ENCODE measurements at regions of chr17 and their contacts with region 1.

Region 1: GRCh38 chr17:74923533-74924249 is 382 bp upstream of the OTOP2 start:
- DNase-seq: peak; percentile 79
- ATAC-seq: peak; percentile 18
- H3K4me3 Mint-ChIP-seq: peak overlapping the region; percentile 70
- H3K27ac Mint-ChIP-seq: no peak overlapping the region
- H3K4me1 Mint-ChIP-seq: peaks cover 13% of the 10 kb centered on the region
- H3K27me3 Mint-ChIP-seq: peaks cover 74% of the 10 kb centered on the region
- CTCF ChIP-seq: peak; percentile 91

Region 2: GRCh38 chr17:74825952-74826719 is 97.6 kb before region 1 on chr17:
- CTCF ChIA-PET with region 1: no interaction called
- POLR2A ChIA-PET with region 1: no interaction called
- DNase-seq: no peak
- ATAC-seq: no peak
- H3K4me3 Mint-ChIP-seq: no peak overlapping the region
- H3K27ac Mint-ChIP-seq: no peak overlapping the region
- H3K4me1 Mint-ChIP-seq: no peaks in the 10 kb centered on the region
- H3K27me3 Mint-ChIP-seq: no peaks in the 10 kb centered on the region
- CTCF ChIP-seq: no peak

Region 3: DNA sequence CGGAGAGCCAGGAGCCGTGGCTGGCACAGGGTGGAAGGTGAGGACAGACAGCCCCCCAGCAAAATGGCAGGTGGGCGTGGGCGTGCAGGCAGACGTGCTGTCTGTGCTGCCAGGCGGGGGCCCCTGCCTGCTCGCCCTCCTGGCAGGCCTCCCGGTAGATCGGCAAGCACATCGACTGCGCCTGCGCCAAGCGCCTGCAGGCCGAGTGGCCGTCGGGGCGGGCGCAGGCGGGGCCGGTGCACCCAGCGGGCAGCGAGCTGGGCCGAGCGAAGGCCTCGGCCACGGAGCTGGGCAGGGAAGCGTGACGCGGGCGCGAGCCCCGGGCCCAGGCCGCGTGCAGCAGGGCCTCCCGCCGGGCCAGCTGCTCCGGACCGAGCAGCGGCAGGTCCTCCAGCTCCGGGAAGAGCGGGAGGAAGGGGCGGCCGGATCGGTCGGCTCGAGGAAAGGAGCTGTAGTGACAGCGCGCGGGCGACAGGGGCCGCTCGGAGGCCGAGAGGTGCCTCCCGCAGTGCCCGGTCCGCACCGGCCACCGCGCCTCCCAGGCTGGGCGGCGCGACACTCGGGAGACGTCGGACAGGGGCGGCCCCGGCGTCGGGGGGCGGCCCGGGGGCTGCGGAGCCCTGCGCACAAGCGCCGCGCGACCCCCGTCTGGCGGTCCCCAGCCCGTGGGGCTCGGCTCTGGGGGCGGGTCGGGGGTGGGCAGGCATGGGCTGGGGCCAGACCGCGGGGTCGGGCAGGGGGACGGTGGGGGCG is 80.9 kb before region 1 on chr17:
- CTCF ChIA-PET with region 1: interaction called, 11 read pairs
- POLR2A ChIA-PET with region 1: no interaction called
- DNase-seq: peak; percentile 75
- ATAC-seq: peak; percentile 81
- H3K4me3 Mint-ChIP-seq: peak overlapping the region; percentile 22; the same call in 1 of the 2 replicates
- H3K27ac Mint-ChIP-seq: no peak overlapping the region
- H3K4me1 Mint-ChIP-seq: peaks cover 21% of the 10 kb centered on the region
- H3K27me3 Mint-ChIP-seq: peaks cover 52% of the 10 kb centered on the region
- CTCF ChIP-seq: no peak

Region 4: DNA sequence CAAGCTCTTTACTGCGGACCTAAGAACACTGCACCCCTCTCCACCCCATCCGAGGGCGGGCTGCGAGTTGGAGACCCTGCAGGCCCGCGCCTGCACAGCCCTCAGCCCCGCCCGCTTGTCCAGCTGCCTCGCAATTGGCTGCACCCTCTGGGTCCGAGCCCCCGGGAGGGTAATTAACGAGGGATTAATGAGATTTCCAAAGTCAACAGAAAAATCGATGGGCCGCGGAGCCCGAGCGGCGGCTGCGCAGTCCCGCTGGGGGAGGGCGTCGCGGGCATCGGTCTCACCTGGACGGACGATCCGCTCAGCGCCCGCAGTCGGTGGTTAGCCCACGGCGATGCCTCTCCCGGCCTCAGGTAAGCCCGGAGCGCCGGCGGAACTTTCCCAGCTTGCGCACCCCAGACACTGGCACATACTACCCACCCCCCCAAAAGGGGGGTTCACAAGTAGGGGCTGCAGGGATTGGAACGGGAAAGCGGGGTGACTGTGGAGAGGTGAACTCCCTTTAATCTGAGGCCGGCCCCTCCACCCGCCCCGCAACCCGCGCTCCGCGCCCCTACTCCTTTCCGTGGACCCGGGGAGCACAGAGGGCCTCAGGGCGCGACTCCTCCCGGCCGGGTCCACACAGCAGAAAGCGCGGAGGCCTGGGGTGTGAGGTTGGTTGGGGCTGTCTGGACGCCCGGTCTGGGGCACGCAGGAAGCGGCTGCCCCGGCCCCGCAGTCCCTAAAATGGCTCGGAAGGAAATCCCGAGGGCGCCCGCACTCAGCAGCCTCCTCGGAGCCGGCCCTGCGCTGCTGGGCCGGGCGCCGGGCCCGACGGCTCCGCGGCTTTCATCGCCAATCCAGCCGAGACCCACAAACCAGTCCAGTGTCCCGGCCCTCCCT is 12.1 kb after region 1 on chr17 and contains the start of gene OTOP3:
- CTCF ChIA-PET with region 1: interaction called, 15 read pairs
- POLR2A ChIA-PET with region 1: interaction called, 14 read pairs
- DNase-seq: peak; percentile 43
- ATAC-seq: peak; percentile 54
- H3K4me3 Mint-ChIP-seq: peak within 1 kb of the TSS; percentile 67
- H3K27ac Mint-ChIP-seq: no peak within 1 kb of the TSS
- H3K4me1 Mint-ChIP-seq: peaks cover 2% of the 10 kb centered on the region; the same call in 1 of the 2 replicates
- H3K27me3 Mint-ChIP-seq: peaks cover 85% of the 10 kb centered on the region
- CTCF ChIP-seq: no peak
- total RNA-seq, gene OTOP3: not detected in 3 replicates

Region 5: GRCh38 chr17:74953134-74953687 is 29.5 kb after region 1 on chr17:
- CTCF ChIA-PET with region 1: interaction called, 206 read pairs
- POLR2A ChIA-PET with region 1: no interaction called
- DNase-seq: no peak
- ATAC-seq: no peak
- H3K4me3 Mint-ChIP-seq: no peak overlapping the region
- H3K27ac Mint-ChIP-seq: no peak overlapping the region
- H3K4me1 Mint-ChIP-seq: peaks cover 9% of the 10 kb centered on the region
- H3K27me3 Mint-ChIP-seq: peaks cover 12% of the 10 kb centered on the region
- CTCF ChIP-seq: no peak

Region 6: DNA sequence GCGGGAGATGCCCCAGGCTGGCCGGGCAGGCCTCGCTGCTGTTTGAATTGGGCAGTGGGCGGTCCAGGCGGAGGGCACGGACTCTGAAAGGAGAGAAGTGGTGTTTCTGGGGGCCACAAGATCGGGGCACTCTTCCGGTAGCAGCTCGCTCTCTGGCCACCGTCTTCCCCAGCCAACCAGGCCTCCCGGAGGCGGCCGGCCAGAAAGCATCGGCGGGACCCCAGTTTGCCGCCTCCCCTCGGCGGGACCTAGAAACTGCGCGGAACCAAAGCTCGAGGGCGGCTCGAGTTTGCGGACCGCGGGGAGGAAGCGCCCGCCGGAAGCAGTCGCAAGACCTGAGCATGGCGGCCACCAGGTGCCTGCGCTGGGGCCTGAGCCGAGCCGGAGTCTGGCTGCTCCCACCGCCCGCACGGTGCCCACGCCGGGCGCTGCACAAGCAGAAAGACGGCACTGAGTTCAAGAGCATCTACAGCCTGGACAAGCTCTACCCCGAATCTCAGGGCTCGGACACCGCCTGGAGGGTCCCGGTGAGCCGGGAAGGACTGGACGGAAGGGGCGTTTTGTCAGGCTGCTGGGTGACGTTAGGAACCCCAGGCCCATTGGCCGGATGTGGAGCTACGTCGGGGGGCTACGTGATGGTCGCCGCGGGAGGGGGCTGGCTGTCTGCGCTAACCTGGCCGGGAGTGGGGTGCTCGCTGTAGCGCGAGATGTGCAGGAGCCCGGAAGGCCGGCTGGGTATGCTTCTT is 88.8 kb after region 1 on chr17 and contains the start of gene MRPL58:
- CTCF ChIA-PET with region 1: interaction called, 12 read pairs
- POLR2A ChIA-PET with region 1: no interaction called
- DNase-seq: peak; percentile 94
- ATAC-seq: peak; percentile 81
- H3K4me3 Mint-ChIP-seq: peak within 1 kb of the TSS; percentile 73
- H3K27ac Mint-ChIP-seq: peak within 1 kb of the TSS; percentile 99
- H3K4me1 Mint-ChIP-seq: peaks cover 26% of the 10 kb centered on the region
- H3K27me3 Mint-ChIP-seq: no peaks in the 10 kb centered on the region
- CTCF ChIP-seq: no peak
- total RNA-seq, gene MRPL58: 41.8 to 43.7 TPM (median 41.9 TPM) in 3 replicates

Region 7: GRCh38 chr17:75041656-75042280 is 118.1 kb after region 1 on chr17:
- CTCF ChIA-PET with region 1: no interaction called
- POLR2A ChIA-PET with region 1: no interaction called
- DNase-seq: no peak
- ATAC-seq: no peak; the same call in 1 of the 2 replicates
- H3K4me3 Mint-ChIP-seq: peak overlapping the region; percentile 15; the same call in 1 of the 2 replicates
- H3K27ac Mint-ChIP-seq: peak overlapping the region; percentile 93
- H3K4me1 Mint-ChIP-seq: peaks cover 48% of the 10 kb centered on the region
- H3K27me3 Mint-ChIP-seq: no peaks in the 10 kb centered on the region
- CTCF ChIP-seq: no peak

Measured in WTC11 (cell line).